PC-9 (cell line): ENCODE measurements at regions of chr1 and their contacts with region 1.

Region 1: DNA sequence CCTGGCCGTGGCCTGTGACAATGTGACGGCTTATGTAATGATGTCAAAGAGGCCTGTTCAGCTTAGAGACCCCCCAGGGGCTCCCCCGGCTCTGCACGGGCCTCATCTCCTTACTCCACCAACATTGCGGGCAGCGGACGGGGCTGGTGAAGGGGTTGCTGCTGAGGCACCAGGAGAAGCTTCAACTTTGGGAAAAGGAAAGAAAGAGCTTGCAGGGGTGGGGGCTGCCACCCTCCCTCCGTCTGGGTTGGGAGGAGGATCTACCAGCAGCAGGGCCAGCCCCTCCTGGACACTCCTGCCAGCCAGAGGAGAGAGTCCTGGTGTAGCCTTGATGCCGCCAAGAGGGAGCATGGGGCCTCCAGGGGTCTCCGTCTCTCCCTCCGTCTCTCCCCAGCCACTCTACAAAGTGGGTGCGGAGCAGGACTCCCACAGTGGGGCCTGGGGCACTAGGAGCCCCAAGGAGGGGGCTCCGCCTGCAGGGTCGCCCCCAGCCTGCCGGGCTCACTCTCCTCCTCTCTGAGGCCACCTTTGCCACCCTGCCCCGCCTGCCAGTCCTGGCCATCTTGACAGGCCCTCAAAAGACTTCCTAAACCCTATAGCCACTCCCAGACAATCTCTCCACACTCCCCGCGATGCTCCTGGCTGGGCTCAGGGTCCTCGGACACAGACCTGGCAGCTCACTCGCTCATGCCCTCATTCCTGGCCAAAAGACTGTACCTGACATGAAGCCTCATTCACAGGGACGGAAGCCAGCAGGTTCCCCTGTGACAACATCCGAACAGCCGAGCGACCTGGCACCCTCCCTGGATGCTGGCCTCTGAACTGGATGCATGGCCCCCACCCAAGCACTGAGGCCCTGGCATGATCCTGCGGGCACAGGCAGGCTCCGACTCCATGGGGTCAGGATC is 130.4 kb upstream of the ARHGEF16 start:
- DNase-seq: no peak
- H3K4me3 ChIP-seq: no peak overlapping the region
- H3K27ac ChIP-seq: no peak overlapping the region
- H3K4me1 ChIP-seq: no peaks in the 10 kb centered on the region
- H3K27me3 ChIP-seq: peaks cover 74% of the 10 kb centered on the region
- CTCF ChIP-seq: no peak

Region 2: GRCh38 chr1:3011631-3012455 is 312.2 kb before region 1 on chr1:
- CTCF ChIA-PET with region 1: no interaction called
- POLR2A ChIA-PET with region 1: no interaction called
- intact Hi-C with region 1: no loop called
- DNase-seq: no peak
- H3K4me3 ChIP-seq: no peak overlapping the region
- H3K27ac ChIP-seq: no peak overlapping the region
- H3K4me1 ChIP-seq: no peaks in the 10 kb centered on the region
- H3K27me3 ChIP-seq: peaks cover 60% of the 10 kb centered on the region
- CTCF ChIP-seq: no peak

Region 3: GRCh38 chr1:3021801-3022401 is 302.1 kb before region 1 on chr1:
- CTCF ChIA-PET with region 1: interaction called, 23 read pairs
- POLR2A ChIA-PET with region 1: no interaction called
- intact Hi-C with region 1: no loop called
- DNase-seq: no peak
- H3K4me3 ChIP-seq: no peak overlapping the region
- H3K27ac ChIP-seq: no peak overlapping the region
- H3K4me1 ChIP-seq: no peaks in the 10 kb centered on the region
- H3K27me3 ChIP-seq: peaks cover 79% of the 10 kb centered on the region
- CTCF ChIP-seq: no peak